ENCODE measurements at regions of chrX and their contacts with region 1.

Region 1: GRCh38 chrX:68550193-68550592 is 51.3 kb downstream of the YIPF6 start:
- DNase-seq: no peak
- ATAC-seq: no peak

Region 2: GRCh38 chrX:68498508-68499379 is 51.4 kb before region 1 on chrX and contains the start of gene YIPF6:
- intact Hi-C with region 1: loop called in 1 of 2 experiments (anchors 10 kb)
- DNase-seq: peak; percentile 80
- ATAC-seq: peak; percentile 96 to 97
- total RNA-seq, gene YIPF6: 31.1 to 33.0 TPM